Activated naive CD4-positive, alpha-beta T cell treated with anti-CD3 and anti-CD28 coated beads, Interleukin-2, amount 10 ng/mL, durations not matched to agents 7 days and 5 days (primary cell): ENCODE measurements at regions of chr1 and their contacts with region 1.

Region 1: GRCh38 chr1:214261206-214262123 is 19.5 kb upstream of the SMYD2 start:
- DNase-seq: peak; percentile 87
- H3K4me3 Mint-ChIP-seq: no peak overlapping the region
- H3K27ac Mint-ChIP-seq: no peak overlapping the region
- H3K4me1 Mint-ChIP-seq: peaks cover 15% of the 10 kb centered on the region
- H3K27me3 Mint-ChIP-seq: peaks cover 52% of the 10 kb centered on the region

Region 2: GRCh38 chr1:213934642-213935041 is 326.8 kb before region 1 on chr1:
- CTCF ChIA-PET with region 1: no interaction called
- DNase-seq: no peak
- H3K4me3 Mint-ChIP-seq: no peak overlapping the region
- H3K27ac Mint-ChIP-seq: no peak overlapping the region
- H3K4me1 Mint-ChIP-seq: no peaks in the 10 kb centered on the region
- H3K27me3 Mint-ChIP-seq: no peaks in the 10 kb centered on the region

Region 3: DNA sequence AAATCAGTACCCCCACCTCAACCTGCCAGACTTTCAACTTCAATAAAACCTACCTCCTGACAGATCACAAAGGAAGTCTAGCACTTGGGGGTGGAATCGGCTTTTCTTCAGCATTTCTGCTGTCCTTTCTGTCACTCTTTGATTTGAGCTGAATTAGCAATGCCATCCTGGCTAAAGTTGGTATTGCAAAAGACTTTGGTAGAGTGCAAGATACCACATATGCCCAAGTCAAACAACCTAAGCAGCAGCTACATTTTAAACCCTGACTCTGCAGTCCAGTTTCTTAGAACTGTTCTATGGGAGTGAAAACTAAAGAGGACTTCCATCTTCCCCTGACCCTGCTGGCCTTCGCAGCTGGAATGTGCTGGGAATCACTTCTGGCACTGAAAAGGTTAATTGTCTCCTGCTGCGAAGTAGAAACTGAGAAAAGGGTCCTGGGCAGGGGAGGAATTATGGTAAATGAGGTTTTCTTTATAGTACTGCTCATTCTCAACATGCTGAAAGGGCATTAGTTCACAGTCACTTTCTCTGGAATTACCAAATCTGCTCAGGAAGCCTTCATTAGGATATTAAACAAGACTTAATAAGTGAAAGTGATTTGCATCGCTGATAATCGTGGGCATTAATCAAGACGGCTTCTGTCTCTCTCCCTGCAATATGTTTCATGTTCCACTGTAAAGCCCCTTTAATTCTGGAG is 106.7 kb before region 1 on chr1:
- CTCF ChIA-PET with region 1: no interaction called
- DNase-seq: no peak
- H3K4me3 Mint-ChIP-seq: no peak overlapping the region
- H3K27ac Mint-ChIP-seq: no peak overlapping the region
- H3K4me1 Mint-ChIP-seq: no peaks in the 10 kb centered on the region
- H3K27me3 Mint-ChIP-seq: peaks cover 15% of the 10 kb centered on the region

Region 4: GRCh38 chr1:214251354-214251753 is 10.1 kb before region 1 on chr1:
- CTCF ChIA-PET with region 1: interaction called, 24 read pairs
- DNase-seq: no peak
- H3K4me3 Mint-ChIP-seq: no peak overlapping the region
- H3K27ac Mint-ChIP-seq: no peak overlapping the region
- H3K4me1 Mint-ChIP-seq: no peaks in the 10 kb centered on the region
- H3K27me3 Mint-ChIP-seq: peaks cover 22% of the 10 kb centered on the region

Region 5: GRCh38 chr1:214310777-214311690 is 49.6 kb after region 1 on chr1:
- CTCF ChIA-PET with region 1: interaction called, 34 read pairs
- DNase-seq: no peak
- H3K4me3 Mint-ChIP-seq: peak overlapping the region; percentile 53
- H3K27ac Mint-ChIP-seq: peak overlapping the region; percentile 30
- H3K4me1 Mint-ChIP-seq: peaks cover 26% of the 10 kb centered on the region
- H3K27me3 Mint-ChIP-seq: no peaks in the 10 kb centered on the region

Region 6: DNA sequence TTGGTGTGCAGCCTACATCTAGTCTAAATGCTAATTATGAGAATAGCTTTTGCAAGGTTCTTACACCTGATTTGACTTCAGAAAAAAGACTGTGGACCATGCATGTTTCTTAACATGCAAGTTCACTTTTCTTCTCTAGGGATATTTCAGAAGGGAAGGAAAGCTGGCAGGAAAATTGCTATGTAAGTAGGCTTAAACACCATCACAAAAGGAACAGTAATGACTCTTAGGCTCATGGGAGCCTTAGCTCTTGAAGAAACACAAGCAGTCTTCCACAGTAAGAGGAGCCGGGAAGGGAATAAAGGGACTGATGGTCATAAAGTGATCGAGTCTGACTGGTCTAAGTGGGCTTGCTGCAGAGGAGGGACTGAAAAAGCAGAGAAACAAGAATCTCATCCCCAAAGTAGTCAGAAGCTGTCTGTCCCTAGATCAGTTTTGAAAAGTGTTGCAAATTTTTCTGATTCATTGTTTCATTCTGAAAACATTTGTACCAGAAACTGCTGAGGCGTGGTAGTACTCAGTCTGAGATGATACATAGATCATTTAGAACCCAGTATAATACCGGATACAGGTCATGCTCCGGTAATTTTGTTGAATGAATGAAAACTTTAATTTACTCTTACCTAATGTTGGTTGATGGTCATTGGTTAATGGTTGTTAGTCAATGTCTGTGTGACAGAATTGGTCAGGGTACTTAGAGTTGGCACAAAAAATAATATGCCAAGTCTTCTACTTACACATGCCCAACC is 60.4 kb after region 1 on chr1:
- CTCF ChIA-PET with region 1: interaction called, 435 read pairs
- DNase-seq: no peak
- H3K4me3 Mint-ChIP-seq: no peak overlapping the region
- H3K27ac Mint-ChIP-seq: no peak overlapping the region
- H3K4me1 Mint-ChIP-seq: peaks cover 2% of the 10 kb centered on the region
- H3K27me3 Mint-ChIP-seq: no peaks in the 10 kb centered on the region

Region 7: DNA sequence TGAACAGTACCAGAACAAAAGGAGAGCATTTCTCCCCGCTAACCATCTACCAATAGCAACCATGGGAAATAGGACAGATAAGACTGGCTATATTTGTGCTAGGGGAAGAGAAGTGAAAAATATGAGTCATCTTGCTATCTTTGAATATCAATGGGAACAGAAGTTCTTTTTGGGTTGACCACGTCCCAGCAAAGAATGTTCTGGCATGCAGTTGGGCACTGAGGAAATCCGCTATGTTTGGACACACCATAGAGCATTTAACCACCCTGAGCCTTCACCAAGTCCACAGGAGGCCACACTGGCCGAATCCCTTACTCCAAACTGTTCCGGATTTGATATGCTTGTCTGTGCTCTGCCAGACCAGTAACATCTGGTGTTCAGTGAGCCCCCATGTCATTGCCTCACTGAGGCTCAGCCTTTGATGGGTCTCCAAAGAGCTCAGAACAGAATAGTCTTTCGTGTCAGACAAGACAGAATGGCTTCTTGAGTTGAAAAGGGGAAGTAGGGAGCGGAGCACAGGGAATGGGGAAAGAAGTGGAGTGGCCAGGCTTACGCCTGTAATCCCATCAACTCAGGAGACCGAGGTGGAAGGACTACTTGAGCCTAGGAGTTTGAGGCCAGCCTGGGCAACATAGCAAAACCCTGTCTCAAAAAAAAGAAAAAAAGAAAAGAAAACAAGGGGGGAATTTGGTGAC is 100.9 kb after region 1 on chr1:
- CTCF ChIA-PET with region 1: no interaction called
- DNase-seq: no peak
- H3K4me3 Mint-ChIP-seq: no peak overlapping the region
- H3K27ac Mint-ChIP-seq: no peak overlapping the region
- H3K4me1 Mint-ChIP-seq: no peaks in the 10 kb centered on the region
- H3K27me3 Mint-ChIP-seq: peaks cover 23% of the 10 kb centered on the region

Region 8: GRCh38 chr1:214416417-214416816 is 155.0 kb after region 1 on chr1:
- CTCF ChIA-PET with region 1: no interaction called
- DNase-seq: no peak
- H3K4me3 Mint-ChIP-seq: no peak overlapping the region
- H3K27ac Mint-ChIP-seq: no peak overlapping the region
- H3K4me1 Mint-ChIP-seq: peaks cover 27% of the 10 kb centered on the region
- H3K27me3 Mint-ChIP-seq: peaks cover 4% of the 10 kb centered on the region